ENCODE measurements at regions of chr10 and their contacts with region 1.

Region 1: DNA sequence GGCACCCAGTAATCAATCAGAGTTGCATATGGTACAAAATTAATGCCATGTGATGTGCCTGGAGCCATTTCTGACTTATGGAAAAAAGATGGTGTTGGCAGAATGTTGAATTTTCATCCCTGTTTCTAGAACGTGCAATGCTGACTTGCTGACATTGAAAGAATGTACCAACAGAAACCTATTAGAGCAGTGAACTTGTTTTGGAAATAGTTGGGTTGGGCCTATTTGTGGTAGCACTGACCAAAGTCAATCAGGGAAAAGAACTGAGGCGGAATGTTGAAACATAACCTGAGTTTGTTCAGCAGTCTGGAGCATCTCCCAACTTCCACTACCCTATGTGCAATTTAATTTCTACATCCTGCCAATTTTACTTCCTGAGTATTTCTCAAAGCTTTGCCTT is 11.7 kb upstream of the KIAA1217 start:
- DNase-seq: no peak
- H3K4me3 ChIP-seq: no peak overlapping the region
- H3K27ac ChIP-seq: peak overlapping the region; percentile 36
- H3K4me1 ChIP-seq: peaks cover 41% of the 10 kb centered on the region
- H3K27me3 ChIP-seq: no peaks in the 10 kb centered on the region
- CTCF ChIP-seq: no peak

Region 2: DNA sequence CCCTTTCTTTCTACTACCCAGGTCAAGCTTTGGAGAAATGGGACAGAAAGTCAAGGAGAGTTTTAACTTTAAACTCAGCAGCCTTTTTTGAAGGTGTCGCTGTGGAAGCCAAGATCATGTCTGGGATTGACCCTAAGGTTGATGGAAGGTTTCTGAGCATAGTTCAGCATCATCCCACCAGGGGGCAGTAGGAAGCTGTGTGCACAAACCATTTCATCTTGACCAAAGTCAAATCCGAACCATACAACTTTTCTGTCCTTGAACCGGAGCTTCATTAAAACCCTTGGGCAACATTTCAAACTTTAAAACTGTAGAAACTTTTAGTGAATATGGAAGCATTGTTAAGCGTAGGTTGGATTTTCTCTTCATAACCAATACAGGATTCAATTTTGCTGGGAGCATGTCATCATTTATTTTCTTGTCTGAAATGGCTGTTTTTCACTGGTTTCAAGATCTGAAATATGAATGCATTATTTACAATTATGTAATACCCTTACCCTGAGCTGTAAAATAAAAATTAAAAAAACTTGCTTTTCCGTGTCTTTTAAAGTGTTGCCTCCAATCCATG is 202.7 kb before region 1 on chr10:
- intact Hi-C with region 1: loop called (anchors 2 kb)
- DNase-seq: peak; percentile 36
- H3K4me3 ChIP-seq: peak overlapping the region; percentile 17
- H3K27ac ChIP-seq: no peak overlapping the region
- H3K4me1 ChIP-seq: peaks cover 6% of the 10 kb centered on the region
- H3K27me3 ChIP-seq: no peaks in the 10 kb centered on the region
- CTCF ChIP-seq: peak; percentile 95

Region 3: DNA sequence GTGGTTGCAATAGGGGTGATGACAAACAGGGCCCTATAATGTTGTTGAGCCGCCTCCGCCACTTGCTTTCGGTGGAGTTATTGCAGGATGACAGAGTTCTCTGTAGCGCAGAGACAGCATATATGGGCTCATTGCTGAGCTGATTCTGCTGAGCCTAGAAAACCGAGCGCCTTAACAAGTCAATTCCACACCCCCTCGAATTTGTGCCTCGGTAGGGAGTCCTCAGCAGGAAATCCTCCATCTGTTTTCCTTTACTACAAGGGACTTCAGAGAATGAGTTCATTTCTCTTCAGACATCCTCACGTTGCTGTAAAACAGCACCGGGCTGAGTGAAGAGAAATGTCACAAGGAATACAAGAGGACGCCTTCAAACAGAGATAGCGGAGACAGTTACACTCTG is 79.0 kb before region 1 on chr10:
- intact Hi-C with region 1: loop called (anchors 10 kb)
- DNase-seq: no peak
- H3K4me3 ChIP-seq: peak overlapping the region; percentile 57
- H3K27ac ChIP-seq: peak overlapping the region; percentile 74
- H3K4me1 ChIP-seq: peaks cover 39% of the 10 kb centered on the region
- H3K27me3 ChIP-seq: no peaks in the 10 kb centered on the region
- CTCF ChIP-seq: no peak

Region 4: DNA sequence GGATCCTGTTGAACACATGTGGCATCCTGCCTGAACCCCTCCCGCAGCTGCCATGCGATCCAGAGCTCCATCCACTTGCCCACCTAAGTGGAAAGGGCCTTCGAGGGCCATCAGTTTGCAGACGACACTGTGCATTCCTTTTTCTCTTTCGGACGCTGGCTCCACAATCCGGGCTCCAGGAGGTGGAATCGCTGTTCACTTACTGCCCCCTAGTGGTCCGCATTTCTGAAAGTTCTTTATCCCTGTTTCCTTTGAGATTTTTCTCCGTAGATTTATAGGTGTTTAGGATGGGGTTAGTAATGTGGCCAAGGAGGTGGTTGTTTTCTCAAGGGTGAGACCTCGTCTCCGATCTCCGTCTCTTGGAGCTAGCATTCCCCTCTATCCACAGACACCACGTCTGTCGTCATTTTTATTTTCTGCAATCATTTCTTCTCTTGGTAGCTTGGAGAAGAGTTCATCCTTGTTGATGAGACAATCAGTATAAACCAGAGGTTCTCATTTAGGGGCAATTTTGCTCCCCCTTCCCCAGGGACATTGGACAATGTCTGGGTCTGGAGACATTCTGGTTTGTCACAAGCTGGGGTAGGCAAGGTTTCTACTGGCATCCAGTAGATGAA is 321.8 kb after region 1 on chr10:
- intact Hi-C with region 1: loop called (anchors 10 kb)
- DNase-seq: peak; percentile 28
- H3K4me3 ChIP-seq: no peak overlapping the region
- H3K27ac ChIP-seq: peak overlapping the region; percentile 32
- H3K4me1 ChIP-seq: peaks cover 14% of the 10 kb centered on the region
- H3K27me3 ChIP-seq: no peaks in the 10 kb centered on the region
- CTCF ChIP-seq: peak; percentile 82